CD4-positive, alpha-beta T cell (primary cell): ENCODE measurements at regions of chr9 and their contacts with region 1.

Region 1: GRCh38 chr9:114317665-114318357 is 5.1 kb upstream of the ORM1 start:
- DNase-seq: no peak
- ATAC-seq: no peak
- H3K4me3 ChIP-seq: no peak overlapping the region
- H3K4me3 Mint-ChIP-seq: no peak overlapping the region
- H3K27ac ChIP-seq: no peak overlapping the region
- H3K27ac Mint-ChIP-seq: no peak overlapping the region
- H3K4me1 ChIP-seq: no peaks in the 10 kb centered on the region
- H3K4me1 Mint-ChIP-seq: no peaks in the 10 kb centered on the region
- H3K27me3 ChIP-seq: peaks cover 0 to 2% of the 10 kb centered on the region in 2 experiments
- H3K27me3 Mint-ChIP-seq: peaks cover 4% of the 10 kb centered on the region
- CTCF ChIP-seq: no peak

Region 2: GRCh38 chr9:114291064-114291474 is 26.7 kb before region 1 on chr9:
- CTCF ChIA-PET with region 1: no interaction called
- POLR2A ChIA-PET with region 1: no interaction called
- intact Hi-C with region 1: no loop called
- DNase-seq: peak; percentile 50 to 81 (median 64)
- ATAC-seq: no peak
- H3K4me3 ChIP-seq: no peak overlapping the region
- H3K4me3 Mint-ChIP-seq: no peak overlapping the region
- H3K27ac ChIP-seq: no peak overlapping the region
- H3K27ac Mint-ChIP-seq: no peak overlapping the region
- H3K4me1 ChIP-seq: peaks cover 3% of the 10 kb centered on the region
- H3K4me1 Mint-ChIP-seq: no peaks in the 10 kb centered on the region
- H3K27me3 ChIP-seq: no peaks in the 10 kb centered on the region
- H3K27me3 Mint-ChIP-seq: peaks cover 6% of the 10 kb centered on the region
- CTCF ChIP-seq: peak; percentile 94

Region 3: DNA sequence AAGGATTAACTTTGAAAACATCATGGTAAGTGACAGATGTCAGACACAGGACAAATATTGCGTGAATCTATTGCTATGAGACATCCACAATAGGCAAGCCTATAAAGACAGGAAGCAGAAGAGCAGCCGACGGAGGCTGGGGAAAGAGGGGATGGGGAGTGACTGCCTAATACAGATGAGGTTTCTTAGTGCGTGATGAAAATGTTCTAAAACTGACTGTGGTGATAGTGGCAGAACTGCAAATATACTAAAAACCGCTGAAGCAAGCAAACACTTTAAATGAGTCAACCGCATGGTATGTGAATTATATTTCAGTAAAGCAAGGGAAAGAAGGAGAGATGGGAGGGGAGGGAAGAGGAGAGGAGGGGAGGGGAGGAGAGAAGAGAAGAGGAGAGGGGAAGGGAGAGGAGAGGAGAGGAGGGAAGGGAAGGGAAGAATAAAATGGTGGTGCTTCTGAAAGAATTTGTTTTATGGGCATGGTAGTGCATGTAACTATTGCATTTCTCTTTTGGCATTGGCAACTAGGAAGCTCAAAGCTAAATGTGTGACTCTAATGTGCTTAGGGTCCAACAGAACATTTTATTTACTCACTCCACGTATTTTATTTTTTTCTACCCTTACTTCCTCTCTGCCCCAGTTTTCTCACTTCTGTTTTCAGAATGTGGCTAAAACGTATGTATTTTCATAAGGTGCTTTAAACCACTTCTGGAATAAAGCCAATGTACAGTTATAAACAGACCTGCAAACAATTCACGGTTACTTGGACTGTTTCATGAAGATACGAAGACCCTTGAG is 48.7 kb after region 1 on chr9:
- CTCF ChIA-PET with region 1: no interaction called
- POLR2A ChIA-PET with region 1: no interaction called
- intact Hi-C with region 1: no loop called
- DNase-seq: peak in 7 of 14 experiments; percentile 29 to 77 (median 67)
- ATAC-seq: peak; percentile 81
- H3K4me3 ChIP-seq: no peak overlapping the region
- H3K4me3 Mint-ChIP-seq: peak overlapping the region; percentile 78
- H3K27ac ChIP-seq: peak overlapping the region; percentile 77 to 81
- H3K27ac Mint-ChIP-seq: peak overlapping the region; percentile 83
- H3K4me1 ChIP-seq: peaks cover 96% of the 10 kb centered on the region
- H3K4me1 Mint-ChIP-seq: peaks cover 91% of the 10 kb centered on the region
- H3K27me3 ChIP-seq: no peaks in the 10 kb centered on the region
- H3K27me3 Mint-ChIP-seq: no peaks in the 10 kb centered on the region
- CTCF ChIP-seq: no peak

Region 4: GRCh38 chr9:115022760-115023434 is 705.1 kb after region 1 on chr9:
- CTCF ChIA-PET with region 1: no interaction called
- POLR2A ChIA-PET with region 1: no interaction called
- intact Hi-C with region 1: loop called in 1 of 2 experiments (anchors 10 kb)
- DNase-seq: no peak
- ATAC-seq: no peak
- H3K4me3 ChIP-seq: no peak overlapping the region
- H3K4me3 Mint-ChIP-seq: no peak overlapping the region
- H3K27ac ChIP-seq: no peak overlapping the region
- H3K27ac Mint-ChIP-seq: no peak overlapping the region
- H3K4me1 ChIP-seq: no peaks in the 10 kb centered on the region
- H3K4me1 Mint-ChIP-seq: no peaks in the 10 kb centered on the region
- H3K27me3 ChIP-seq: no peaks in the 10 kb centered on the region
- H3K27me3 Mint-ChIP-seq: peaks cover 9% of the 10 kb centered on the region
- CTCF ChIP-seq: no peak